ENCODE measurements at regions of chr1 and their contacts with region 1.

Region 1: GRCh38 chr1:228471762-228472398 is 15.3 kb upstream of the RNF187 start:
- DNase-seq: peak; percentile 65 to 79 (median 70)
- ATAC-seq: peak; percentile 93
- H3K4me3 ChIP-seq: no peak overlapping the region
- H3K27ac ChIP-seq: no peak overlapping the region
- H3K4me1 ChIP-seq: peaks cover 19 to 23% of the 10 kb centered on the region in 2 experiments
- H3K27me3 ChIP-seq: peaks cover 0 to 11% of the 10 kb centered on the region in 2 experiments; a peak in 3 of 5 replicates
- CTCF ChIP-seq: peak; percentile 82 to 89 (median 84)
- EP300 ChIP-seq: no peak
- POLR2A ChIP-seq: no peak
- RAD21 ChIP-seq: peak; percentile 66 to 80

Region 2: DNA sequence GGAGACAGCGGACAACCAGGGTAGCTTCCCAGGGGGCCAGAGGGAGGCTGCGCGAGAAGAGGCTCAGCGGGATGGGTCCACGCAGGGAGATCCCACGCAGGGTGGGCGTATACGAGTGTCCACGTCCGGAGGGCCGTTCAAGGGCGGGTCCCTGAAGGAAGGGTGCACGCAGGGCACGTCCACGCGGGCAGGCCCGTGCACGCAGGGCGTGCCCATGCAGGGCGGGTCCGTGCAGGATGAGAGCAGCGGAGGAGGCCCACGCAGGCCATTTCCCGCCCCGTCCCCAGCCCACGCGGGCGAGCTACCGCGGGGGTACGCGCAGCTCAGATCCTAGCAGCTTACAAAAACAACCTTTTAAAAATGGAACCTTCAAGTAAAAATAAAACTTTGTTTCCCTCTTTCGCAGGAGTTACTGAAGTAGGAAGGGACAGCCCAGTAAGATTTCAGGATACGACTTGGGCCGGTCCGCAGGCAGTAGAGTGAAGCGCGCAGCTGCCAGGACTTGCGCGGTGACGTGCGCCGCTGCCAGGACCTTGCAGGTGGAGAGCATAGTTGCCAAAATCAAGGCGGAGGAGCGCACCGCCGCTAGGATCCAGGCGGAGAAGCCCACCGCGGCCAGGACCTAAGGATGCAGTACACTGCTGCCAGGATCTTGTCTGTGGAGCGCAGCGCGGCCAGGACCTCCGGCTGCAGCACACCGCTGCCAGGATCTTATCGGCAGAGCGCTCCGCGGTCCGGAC is 14.9 kb after region 1 on chr1:
- CTCF ChIA-PET with region 1: no interaction called
- POLR2A ChIA-PET with region 1: interaction called, 10 read pairs
- in situ Hi-C with region 1: no loop called
- intact Hi-C with region 1: no loop called
- DNase-seq: peak; percentile 73 to 92 (median 76)
- ATAC-seq: peak; percentile 58
- H3K4me3 ChIP-seq: peak overlapping the region; percentile 75
- H3K27ac ChIP-seq: peak overlapping the region; percentile 97
- H3K4me1 ChIP-seq: peaks cover 37 to 46% of the 10 kb centered on the region in 2 experiments
- H3K27me3 ChIP-seq: no peaks in the 10 kb centered on the region
- CTCF ChIP-seq: no peak
- EP300 ChIP-seq: no peak
- POLR2A ChIP-seq: peak; percentile 62; the same call in 1 of the 2 replicates
- RAD21 ChIP-seq: 0 out of 4 replicates have a peak, but pooled peaks of 1 of the 2 experiments have one; percentile 4